ENCODE measurements at regions of chr18 and their contacts with region 1.

Region 1: DNA sequence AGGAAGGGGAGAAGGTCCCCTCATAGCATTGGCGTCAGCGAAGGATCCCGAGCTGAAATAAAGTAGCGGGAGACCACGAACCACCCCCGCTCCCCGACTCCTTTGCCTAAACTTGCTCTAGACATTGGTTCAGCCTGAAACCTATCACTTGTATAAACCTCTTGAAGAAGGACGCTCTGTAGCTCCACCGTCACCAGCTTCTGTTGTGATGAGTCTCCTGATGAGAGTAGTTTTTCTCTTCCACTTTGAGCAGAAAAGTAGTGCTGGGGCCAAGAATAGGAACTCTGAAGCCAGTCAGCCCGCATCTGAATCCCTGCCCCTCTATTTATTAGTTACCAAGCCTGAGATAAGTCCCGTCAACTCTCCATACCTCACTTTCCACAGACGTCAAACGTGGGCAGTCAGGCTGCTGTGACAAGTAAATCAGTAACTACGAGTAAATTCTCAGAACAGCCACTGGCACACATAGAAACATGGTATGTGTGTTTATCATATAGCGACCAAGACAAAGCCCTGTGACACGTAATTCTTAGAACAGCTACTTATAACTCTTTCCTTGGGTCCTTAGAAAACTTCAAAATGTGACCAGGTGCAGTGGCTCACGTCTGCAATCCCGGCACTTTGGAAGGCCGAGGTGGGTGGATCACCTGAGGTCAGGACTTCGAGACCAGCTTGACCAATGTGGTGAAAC is 61.7 kb downstream of the CD226 start:
- DNase-seq: peak; percentile 84
- H3K4me3 Mint-ChIP-seq: peak overlapping the region; percentile 72
- H3K27ac Mint-ChIP-seq: peak overlapping the region; percentile 99
- H3K4me1 Mint-ChIP-seq: peaks cover 63% of the 10 kb centered on the region
- H3K27me3 Mint-ChIP-seq: no peaks in the 10 kb centered on the region

Region 2: GRCh38 chr18:69865776-69866175 is 20.2 kb before region 1 on chr18:
- intact Hi-C with region 1: loop called (anchors 2 kb)
- DNase-seq: no peak
- H3K4me3 Mint-ChIP-seq: no peak overlapping the region
- H3K27ac Mint-ChIP-seq: no peak overlapping the region
- H3K4me1 Mint-ChIP-seq: peaks cover 9% of the 10 kb centered on the region
- H3K27me3 Mint-ChIP-seq: no peaks in the 10 kb centered on the region

Region 3: DNA sequence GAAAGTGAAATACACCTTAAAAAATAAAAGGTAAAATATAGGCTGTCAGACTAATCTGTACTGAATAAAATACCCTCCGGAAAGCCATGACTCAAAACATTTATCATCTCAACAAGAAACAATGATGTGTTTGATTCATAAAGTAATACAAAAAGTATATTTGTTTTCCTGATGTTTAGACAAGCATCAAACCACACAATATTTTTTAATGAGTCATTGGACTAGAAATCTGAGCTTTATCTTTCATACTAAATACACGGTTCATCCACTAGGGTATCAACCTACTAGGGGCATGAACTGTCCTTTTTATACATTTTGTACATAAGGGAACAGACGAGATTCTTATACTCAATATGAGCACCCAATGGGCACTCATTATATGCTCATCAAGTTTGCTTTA is 30.4 kb after region 1 on chr18:
- intact Hi-C with region 1: no loop called
- DNase-seq: no peak
- H3K4me3 Mint-ChIP-seq: no peak overlapping the region
- H3K27ac Mint-ChIP-seq: peak overlapping the region; percentile 9
- H3K4me1 Mint-ChIP-seq: peaks cover 49% of the 10 kb centered on the region
- H3K27me3 Mint-ChIP-seq: no peaks in the 10 kb centered on the region

Measured in activated CD4-positive, alpha-beta T cell treated with anti-CD3 and anti-CD28 coated beads, Interleukin-2, amount 10 ng/mL, durations not matched to agents 24 days and 14 days (primary cell).